A549 (cell line): ENCODE measurements at regions of chr11 and their contacts with region 1.

Region 1: DNA sequence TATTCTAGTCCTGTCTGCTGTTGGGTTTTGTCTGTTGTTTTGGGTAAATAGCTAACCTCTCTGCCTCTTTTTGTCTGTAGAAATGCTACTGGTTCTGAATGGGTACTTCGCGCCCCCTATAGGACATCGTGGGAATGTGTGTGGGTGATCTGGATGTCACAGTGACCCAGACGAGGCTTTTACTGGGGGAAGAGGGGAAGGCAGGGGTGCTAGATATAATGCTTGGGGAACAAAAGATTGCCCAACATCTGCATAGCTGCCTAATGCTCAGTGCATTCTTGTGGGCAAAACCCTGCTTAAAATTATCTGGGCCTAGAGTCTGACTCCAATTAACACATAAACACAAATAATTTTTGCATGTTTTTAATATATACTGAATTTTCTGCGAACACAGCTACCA is 57.7 kb downstream of the BMAL1 start:
- DNase-seq: peak; percentile 71 to 76
- ATAC-seq: peak in 1 of 2 experiments; percentile 21; a peak in 3 of 6 replicates
- H3K4me3 ChIP-seq: no peak overlapping the region
- H3K27ac ChIP-seq: peak overlapping the region; percentile 87 to 95
- H3K4me1 ChIP-seq: peaks cover 83% of the 10 kb centered on the region
- CTCF ChIP-seq: peak; percentile 77
- EP300 ChIP-seq: no peak
- POLR2A ChIP-seq: no peak
- RAD21 ChIP-seq: peak; percentile 78 to 87

Region 2: DNA sequence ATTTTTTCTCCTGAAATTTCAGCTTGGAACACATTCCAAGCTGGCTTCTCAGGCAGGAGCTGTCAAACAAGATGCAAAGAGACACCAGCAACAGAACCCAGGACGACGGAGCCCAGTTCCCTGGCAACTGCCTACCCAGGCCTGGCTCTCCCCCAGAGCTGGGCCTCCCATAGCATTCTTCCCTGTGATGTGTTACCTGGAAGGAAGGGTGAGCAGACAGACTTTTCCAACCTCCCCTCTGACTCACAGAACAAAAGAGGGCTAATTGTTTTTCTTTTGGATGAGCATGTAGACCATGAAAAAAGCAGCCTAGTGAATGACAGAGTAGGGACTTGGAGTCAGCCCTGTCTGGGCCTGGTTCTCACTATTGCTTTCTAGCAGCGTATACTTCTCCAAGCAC is 113.0 kb before region 1 on chr11:
- CTCF ChIA-PET with region 1: interaction called, 320 read pairs
- POLR2A ChIA-PET with region 1: no interaction called
- DNase-seq: no peak
- ATAC-seq: peak in 1 of 2 experiments; percentile 37; a peak in 3 of 6 replicates
- H3K4me3 ChIP-seq: no peak overlapping the region
- H3K27ac ChIP-seq: peak overlapping the region in 1 of 2 experiments; percentile 63; a peak in 2 of 6 replicates
- H3K4me1 ChIP-seq: peaks cover 16% of the 10 kb centered on the region
- CTCF ChIP-seq: no peak
- EP300 ChIP-seq: no peak
- POLR2A ChIP-seq: no peak
- RAD21 ChIP-seq: no peak

Region 3: GRCh38 chr11:13261591-13262061 is 73.7 kb before region 1 on chr11:
- CTCF ChIA-PET with region 1: interaction called, 18 read pairs
- POLR2A ChIA-PET with region 1: no interaction called
- DNase-seq: peak; percentile 69 to 84
- ATAC-seq: peak; percentile 78 to 95
- H3K4me3 ChIP-seq: no peak overlapping the region
- H3K27ac ChIP-seq: peak overlapping the region; percentile 62 to 84
- H3K4me1 ChIP-seq: peaks cover 30% of the 10 kb centered on the region
- CTCF ChIP-seq: no peak
- EP300 ChIP-seq: no peak
- POLR2A ChIP-seq: no peak
- RAD21 ChIP-seq: no peak

Region 4: DNA sequence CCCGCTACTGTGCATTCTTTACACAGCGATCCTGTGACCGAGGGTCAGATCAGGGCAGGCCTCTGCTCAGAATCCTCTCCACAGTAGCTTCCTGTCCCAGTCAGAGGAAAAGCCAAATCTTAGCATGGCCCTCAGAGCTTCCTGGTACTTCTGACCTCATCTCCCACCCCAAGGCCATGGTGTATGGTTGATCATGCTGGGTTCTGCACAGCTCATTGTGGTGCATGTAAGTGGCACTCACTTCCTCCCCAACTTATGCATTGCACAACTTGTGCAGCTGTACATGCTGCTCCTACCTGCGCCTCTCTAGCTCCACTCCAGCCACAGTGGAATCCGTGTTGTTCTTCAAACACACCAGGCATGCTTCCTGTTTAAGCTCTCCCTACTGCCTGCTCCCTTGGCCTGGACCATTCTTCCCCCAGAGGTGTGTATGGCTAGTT is 37.4 kb before region 1 on chr11:
- CTCF ChIA-PET with region 1: interaction called, 15 read pairs
- POLR2A ChIA-PET with region 1: no interaction called
- DNase-seq: no peak
- ATAC-seq: no peak
- H3K4me3 ChIP-seq: no peak overlapping the region
- H3K27ac ChIP-seq: no peak overlapping the region
- H3K4me1 ChIP-seq: 0 out of 3 replicates have a peak, but pooled peaks cover under 1% of the 10 kb centered on the region
- CTCF ChIP-seq: no peak
- EP300 ChIP-seq: no peak
- POLR2A ChIP-seq: no peak
- RAD21 ChIP-seq: no peak

Region 5: DNA sequence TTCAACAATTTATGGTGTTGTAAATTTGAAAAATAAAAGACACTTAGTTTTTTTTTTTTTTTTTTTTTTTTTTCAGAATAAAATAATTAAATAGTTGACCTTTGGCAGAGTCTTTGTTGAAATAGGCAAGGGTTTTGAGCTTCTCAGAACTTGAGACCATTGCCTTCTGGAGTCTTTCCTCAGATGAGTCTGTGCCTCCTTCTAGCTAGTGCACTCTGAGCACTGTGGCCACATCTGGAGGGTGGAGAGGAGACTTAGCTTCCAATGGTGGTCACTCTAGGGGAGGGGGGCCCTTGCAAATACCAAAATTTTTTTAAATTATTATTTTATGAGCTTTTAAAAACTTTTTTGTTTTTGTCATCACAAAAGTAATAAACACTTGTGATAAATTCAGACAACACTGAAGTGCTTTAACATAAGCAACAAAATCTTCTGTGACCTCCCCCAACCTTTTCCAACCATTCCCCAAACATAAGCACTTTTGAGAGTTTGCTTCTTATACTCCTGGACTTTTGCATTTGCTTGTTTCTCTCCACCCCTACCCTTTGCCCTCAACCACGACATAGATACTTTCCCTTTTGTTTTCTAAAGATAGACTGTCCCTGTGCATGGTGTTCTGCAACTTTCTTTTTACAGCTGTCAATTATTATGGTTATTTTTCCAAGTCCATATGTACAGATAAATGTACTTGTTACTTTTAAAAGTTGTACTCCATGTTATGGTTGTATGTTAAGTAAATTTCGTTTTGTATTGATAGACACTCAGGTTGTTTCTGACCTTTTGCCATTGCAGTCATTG is 16.6 kb before region 1 on chr11:
- CTCF ChIA-PET with region 1: interaction called, 20 read pairs
- POLR2A ChIA-PET with region 1: no interaction called
- DNase-seq: no peak
- ATAC-seq: no peak
- H3K4me3 ChIP-seq: no peak overlapping the region
- H3K27ac ChIP-seq: no peak overlapping the region
- H3K4me1 ChIP-seq: peaks cover 42% of the 10 kb centered on the region
- CTCF ChIP-seq: no peak
- EP300 ChIP-seq: no peak
- POLR2A ChIP-seq: no peak
- RAD21 ChIP-seq: no peak